Naive thymus-derived CD4-positive, alpha-beta T cell (primary cell): ENCODE measurements at regions of chr18 and their contacts with region 1.

Region 1: DNA sequence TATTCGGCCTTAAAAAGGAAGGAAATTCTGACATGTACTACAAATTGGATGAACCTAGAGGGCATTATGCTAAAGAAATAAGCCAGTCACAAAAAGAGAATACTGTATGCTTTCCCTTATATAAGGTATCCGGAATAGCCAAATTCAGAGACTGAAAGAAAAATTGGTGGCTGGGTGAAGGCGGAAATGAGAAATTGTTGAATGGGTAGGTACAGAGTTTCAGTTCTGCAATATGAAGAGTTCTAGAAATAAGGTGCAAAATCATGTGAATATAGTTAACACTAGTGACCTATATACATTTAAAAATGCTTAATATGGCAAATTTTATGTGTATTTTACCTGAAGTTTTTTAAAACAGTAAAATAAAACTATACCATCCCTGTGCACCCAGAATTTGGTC is 43.1 kb downstream of the RMP24 start:
- DNase-seq: no peak
- ATAC-seq: no peak
- H3K4me3 ChIP-seq: no peak overlapping the region
- H3K4me3 Mint-ChIP-seq: no peak overlapping the region
- H3K27ac ChIP-seq: no peak overlapping the region
- H3K27ac Mint-ChIP-seq: no peak overlapping the region
- H3K4me1 ChIP-seq: no peaks in the 10 kb centered on the region
- H3K4me1 Mint-ChIP-seq: peaks cover 0 to 17% (median 5%) of the 10 kb centered on the region in 7 donors
- H3K27me3 ChIP-seq: no peaks in the 10 kb centered on the region
- H3K27me3 Mint-ChIP-seq: no peaks in the 10 kb centered on the region

Region 2: GRCh38 chr18:36284671-36285295 is 269.2 kb after region 1 on chr18:
- CTCF ChIA-PET with region 1: interaction called, 38 read pairs
- POLR2A ChIA-PET with region 1: no interaction called
- intact Hi-C with region 1: loop called (anchors 1 kb)
- DNase-seq: peak in 7 of 9 donors; percentile 20 to 61 (median 54)
- ATAC-seq: peak; percentile 67
- H3K4me3 ChIP-seq: no peak overlapping the region
- H3K4me3 Mint-ChIP-seq: no peak overlapping the region
- H3K27ac ChIP-seq: no peak overlapping the region
- H3K27ac Mint-ChIP-seq: no peak overlapping the region
- H3K4me1 ChIP-seq: no peaks in the 10 kb centered on the region
- H3K4me1 Mint-ChIP-seq: peaks cover 0 to 4% (median 0%) of the 10 kb centered on the region in 7 donors
- H3K27me3 ChIP-seq: no peaks in the 10 kb centered on the region
- H3K27me3 Mint-ChIP-seq: peaks cover 30 to 59% (median 33%) of the 10 kb centered on the region in 5 donors

Region 3: GRCh38 chr18:36572135-36572856 is 556.7 kb after region 1 on chr18:
- CTCF ChIA-PET with region 1: no interaction called
- POLR2A ChIA-PET with region 1: no interaction called
- intact Hi-C with region 1: loop called (anchors 5 kb)
- DNase-seq: peak in 1 of 9 donors; percentile 11
- ATAC-seq: no peak
- H3K4me3 ChIP-seq: no peak overlapping the region
- H3K4me3 Mint-ChIP-seq: no peak overlapping the region
- H3K27ac ChIP-seq: no peak overlapping the region
- H3K27ac Mint-ChIP-seq: no peak overlapping the region
- H3K4me1 ChIP-seq: no peaks in the 10 kb centered on the region
- H3K4me1 Mint-ChIP-seq: peaks cover 0 to 6% (median 0%) of the 10 kb centered on the region in 7 donors
- H3K27me3 ChIP-seq: no peaks in the 10 kb centered on the region
- H3K27me3 Mint-ChIP-seq: peaks cover under 1 to 26% (median 18%) of the 10 kb centered on the region in 5 donors